ENCODE measurements at regions of chr20 and their contacts with region 1.

Region 1: GRCh38 chr20:49583669-49584417 is 15.9 kb upstream of the PTGIS start:
- DNase-seq: peak; percentile 97
- ATAC-seq: peak; percentile 95
- H3K4me3 ChIP-seq: peak overlapping the region in 2 of 3 experiments; percentile 29 to 59; a peak in 4 of 6 replicates
- H3K27ac ChIP-seq: peak overlapping the region; percentile 84
- H3K4me1 ChIP-seq: peaks cover 56% of the 10 kb centered on the region
- H3K27me3 ChIP-seq: peaks cover 0 to 4% of the 10 kb centered on the region in 2 experiments; a peak in 1 of 5 replicates
- CTCF ChIP-seq: peak; percentile 90
- EP300 ChIP-seq: peak; percentile 82 to 91
- POLR2A ChIP-seq: peak; percentile 80 to 94
- RAD21 ChIP-seq: peak; percentile 80

Region 2: DNA sequence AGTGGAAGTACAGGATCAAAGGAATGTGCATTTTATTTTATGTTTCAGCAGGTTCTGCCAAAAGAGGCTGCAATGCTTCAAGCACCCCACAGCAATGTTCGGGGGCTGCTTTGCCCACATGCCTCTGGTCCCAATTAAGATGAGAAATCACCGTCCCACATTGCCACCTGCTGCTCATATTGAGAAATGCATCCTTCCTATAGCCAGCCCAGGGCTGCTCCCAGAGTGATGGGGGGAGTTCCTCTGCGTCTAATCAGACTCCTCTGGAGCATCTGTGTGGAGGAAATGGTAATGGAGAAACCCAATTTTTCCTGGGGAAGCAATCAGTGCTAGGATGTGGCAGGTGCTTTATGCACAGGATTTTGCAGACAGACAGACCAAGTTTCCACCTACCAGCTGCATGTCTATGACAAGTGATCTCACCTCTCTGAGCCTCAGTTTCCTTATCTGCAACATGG is 49.6 kb before region 1 on chr20:
- CTCF ChIA-PET with region 1: no interaction called
- POLR2A ChIA-PET with region 1: no interaction called
- in situ Hi-C with region 1: no loop called
- intact Hi-C with region 1: no loop called
- DNase-seq: peak; percentile 63
- ATAC-seq: peak; percentile 87
- H3K4me3 ChIP-seq: no peak overlapping the region
- H3K27ac ChIP-seq: no peak overlapping the region
- H3K4me1 ChIP-seq: no peaks in the 10 kb centered on the region
- H3K27me3 ChIP-seq: peaks cover 0 to 1% of the 10 kb centered on the region in 2 experiments; a peak in 1 of 5 replicates
- CTCF ChIP-seq: peak; percentile 91
- EP300 ChIP-seq: no peak
- POLR2A ChIP-seq: no peak
- RAD21 ChIP-seq: peak; percentile 65

Region 3: GRCh38 chr20:49568471-49569161 is 15.2 kb before region 1 on chr20:
- CTCF ChIA-PET with region 1: no interaction called
- POLR2A ChIA-PET with region 1: interaction called, 14 read pairs
- in situ Hi-C with region 1: no loop called
- intact Hi-C with region 1: no loop called
- DNase-seq: no peak
- ATAC-seq: no peak
- H3K4me3 ChIP-seq: no peak overlapping the region
- H3K27ac ChIP-seq: no peak overlapping the region
- H3K4me1 ChIP-seq: peaks cover 19% of the 10 kb centered on the region; the same call in 1 of the 2 replicates
- H3K27me3 ChIP-seq: peaks cover 3 to 53% of the 10 kb centered on the region in 2 experiments; a peak in 4 of 5 replicates
- CTCF ChIP-seq: no peak
- EP300 ChIP-seq: no peak
- POLR2A ChIP-seq: no peak
- RAD21 ChIP-seq: no peak

Region 4: DNA sequence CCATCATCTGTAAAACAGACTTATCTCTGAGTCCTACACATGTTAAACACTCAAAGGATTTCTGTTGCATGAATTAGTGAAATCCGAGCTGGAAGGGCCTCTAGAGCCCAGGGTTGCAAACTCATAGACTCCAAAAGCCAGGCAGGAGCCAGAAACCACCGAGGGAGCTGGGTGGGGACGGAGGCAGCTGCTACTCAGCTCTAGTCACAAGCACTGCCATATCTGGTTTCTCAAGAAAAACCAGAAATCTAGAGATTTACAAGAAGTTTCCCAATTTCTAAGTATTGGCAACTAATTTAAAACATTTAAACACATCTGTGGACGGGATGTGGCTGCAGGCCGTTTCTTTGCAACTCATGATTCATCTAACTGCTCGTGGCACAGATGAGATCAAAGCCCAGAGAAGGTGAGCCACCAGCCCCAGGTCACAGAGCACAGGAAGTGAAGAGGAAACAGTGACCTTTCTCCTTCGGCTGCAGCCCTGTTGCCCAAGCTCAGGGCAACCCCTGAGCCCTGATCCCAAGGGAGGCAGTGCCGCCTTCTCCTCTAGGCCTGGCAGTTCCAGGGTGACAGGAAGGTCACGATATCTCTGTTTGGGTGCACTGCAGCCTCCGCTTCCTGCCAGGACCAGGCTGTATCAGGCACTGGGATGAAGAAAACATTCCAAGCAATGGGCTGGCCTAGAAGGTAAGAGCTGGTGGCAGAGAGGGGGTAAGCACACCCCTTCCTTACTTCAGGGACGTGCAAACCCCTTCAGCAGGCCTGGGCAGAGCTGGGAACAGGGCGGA is 10.5 kb after region 1 on chr20:
- CTCF ChIA-PET with region 1: no interaction called
- POLR2A ChIA-PET with region 1: interaction called, 126 read pairs
- in situ Hi-C with region 1: no loop called
- intact Hi-C with region 1: no loop called
- DNase-seq: no peak
- ATAC-seq: peak; percentile 27
- H3K4me3 ChIP-seq: peak overlapping the region in 1 of 3 experiments; percentile 44; a peak in 1 of 6 replicates
- H3K27ac ChIP-seq: no peak overlapping the region
- H3K4me1 ChIP-seq: peaks cover 54% of the 10 kb centered on the region
- H3K27me3 ChIP-seq: no peaks in the 10 kb centered on the region; a peak in 3 of 5 replicates
- CTCF ChIP-seq: no peak; the same call in 1 of the 2 replicates
- EP300 ChIP-seq: no peak
- POLR2A ChIP-seq: no peak
- RAD21 ChIP-seq: no peak; the same call in 1 of the 2 replicates

Region 5: DNA sequence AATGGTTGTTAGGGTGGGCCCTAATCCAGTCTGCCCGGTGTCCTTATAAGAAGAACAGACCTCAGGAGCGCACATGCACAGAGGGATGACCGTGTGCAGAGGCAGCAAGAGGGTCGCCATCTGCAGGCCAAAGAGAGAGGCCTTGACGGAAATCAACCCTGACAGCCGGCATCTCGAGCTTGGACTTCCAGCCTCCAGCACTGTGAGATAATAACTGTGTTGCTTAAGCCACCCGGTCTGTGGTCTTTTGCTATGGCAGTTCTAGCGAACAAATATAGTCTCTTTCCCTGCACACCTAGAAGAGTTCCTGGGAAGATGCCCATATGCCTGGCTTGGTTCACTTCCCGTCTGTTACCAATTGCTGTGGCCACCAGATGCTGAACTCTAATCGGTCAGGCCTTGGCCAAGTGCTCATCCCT is 19.4 kb after region 1 on chr20:
- CTCF ChIA-PET with region 1: interaction called, 15 read pairs
- POLR2A ChIA-PET with region 1: interaction called, 126 read pairs
- in situ Hi-C with region 1: no loop called
- intact Hi-C with region 1: loop called (anchors 1 kb)
- DNase-seq: peak; percentile 84
- ATAC-seq: peak; percentile 68
- H3K4me3 ChIP-seq: peak overlapping the region in 1 of 3 experiments; percentile 20; a peak in 1 of 6 replicates
- H3K27ac ChIP-seq: no peak overlapping the region
- H3K4me1 ChIP-seq: peaks cover 64% of the 10 kb centered on the region
- H3K27me3 ChIP-seq: no peaks in the 10 kb centered on the region
- CTCF ChIP-seq: peak; percentile 94
- EP300 ChIP-seq: no peak
- POLR2A ChIP-seq: no peak
- RAD21 ChIP-seq: peak; percentile 82

Region 6: GRCh38 chr20:50146732-50147662 is 563.2 kb after region 1 on chr20:
- CTCF ChIA-PET with region 1: no interaction called
- POLR2A ChIA-PET with region 1: no interaction called
- in situ Hi-C with region 1: no loop called
- intact Hi-C with region 1: no loop called
- DNase-seq: no peak
- ATAC-seq: no peak
- H3K4me3 ChIP-seq: no peak overlapping the region
- H3K27ac ChIP-seq: peak overlapping the region; percentile 0
- H3K4me1 ChIP-seq: peaks cover 63% of the 10 kb centered on the region
- H3K27me3 ChIP-seq: no peaks in the 10 kb centered on the region
- CTCF ChIP-seq: no peak
- EP300 ChIP-seq: no peak
- POLR2A ChIP-seq: no peak
- RAD21 ChIP-seq: no peak